H1 (cell line): ENCODE measurements at regions of chr6 and their contacts with region 1.

Region 1: GRCh38 chr6:3848925-3849605 is at the start of gene FAM50B:
- DNase-seq: peak; percentile 64 to 99
- H3K4me3 ChIP-seq: peak within 1 kb of the TSS; percentile 46 to 71 (median 60)
- H3K27ac ChIP-seq: no peak within 1 kb of the TSS
- H3K4me1 ChIP-seq: peaks cover 0 to 10% (median 4%) of the 10 kb centered on the region in 4 experiments; a peak in 5 of 7 replicates
- H3K27me3 ChIP-seq: 0 out of 7 replicates have a peak, but pooled peaks cover 0 to 2% (median 0%) of the 10 kb centered on the region in 4 experiments
- CTCF ChIP-seq: peak; percentile 91 to 99 (median 95)
- EP300 ChIP-seq: no peak
- POLR2A ChIP-seq: peak in 1 of 2 experiments; percentile 50; a peak in 1 of 3 replicates
- RAD21 ChIP-seq: peak; percentile 85 to 89
- total RNA-seq, gene FAM50B: 3.1 and 3.8 TPM in 2 replicates

Region 2: DNA sequence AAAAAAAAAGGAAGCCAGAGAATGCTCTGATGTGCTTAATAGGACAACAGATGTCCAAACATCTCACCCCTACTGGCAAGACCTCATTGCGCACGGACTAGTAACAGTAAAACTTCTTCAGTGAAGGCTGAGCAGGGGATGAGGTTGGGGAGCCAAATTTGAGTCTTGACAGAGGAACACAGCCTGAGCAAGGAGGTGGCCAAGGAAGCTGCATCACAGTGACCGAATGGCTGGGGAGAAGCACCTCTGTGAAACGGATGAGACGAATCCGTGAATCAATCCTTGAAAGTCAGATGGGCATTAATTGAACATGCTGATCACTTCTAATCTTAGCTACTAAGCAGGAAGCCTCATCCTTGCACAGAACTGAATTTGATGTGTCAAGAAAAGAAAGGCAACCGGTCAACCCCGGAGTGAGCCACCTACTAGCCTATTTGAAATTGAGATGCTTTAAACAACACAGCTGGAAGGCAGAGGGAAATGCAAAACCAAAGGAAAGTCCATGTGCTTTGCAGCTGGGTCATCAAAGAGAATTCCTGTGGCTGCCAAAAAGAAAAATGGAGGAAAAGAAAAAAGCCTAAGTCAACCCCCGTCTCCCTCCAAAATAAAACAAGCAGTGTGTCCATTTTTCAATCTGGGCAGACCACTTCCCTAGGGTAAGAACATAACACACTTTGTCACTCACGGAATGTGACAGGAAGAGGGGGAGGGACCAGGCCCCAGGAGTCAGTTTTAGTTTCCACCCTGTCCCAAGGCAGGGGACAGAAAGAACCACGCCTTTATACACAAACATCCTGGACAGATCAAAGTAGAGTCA is 127.0 kb before region 1 on chr6:
- CTCF ChIA-PET with region 1: no interaction called
- POLR2A ChIA-PET with region 1: no interaction called
- DNase-seq: no peak
- H3K4me3 ChIP-seq: no peak overlapping the region
- H3K27ac ChIP-seq: no peak overlapping the region
- H3K4me1 ChIP-seq: peaks cover 0 to 12% (median 4%) of the 10 kb centered on the region in 4 experiments; a peak in 6 of 7 replicates
- H3K27me3 ChIP-seq: no peaks in the 10 kb centered on the region
- CTCF ChIP-seq: no peak
- EP300 ChIP-seq: no peak
- POLR2A ChIP-seq: no peak
- RAD21 ChIP-seq: no peak

Region 3: DNA sequence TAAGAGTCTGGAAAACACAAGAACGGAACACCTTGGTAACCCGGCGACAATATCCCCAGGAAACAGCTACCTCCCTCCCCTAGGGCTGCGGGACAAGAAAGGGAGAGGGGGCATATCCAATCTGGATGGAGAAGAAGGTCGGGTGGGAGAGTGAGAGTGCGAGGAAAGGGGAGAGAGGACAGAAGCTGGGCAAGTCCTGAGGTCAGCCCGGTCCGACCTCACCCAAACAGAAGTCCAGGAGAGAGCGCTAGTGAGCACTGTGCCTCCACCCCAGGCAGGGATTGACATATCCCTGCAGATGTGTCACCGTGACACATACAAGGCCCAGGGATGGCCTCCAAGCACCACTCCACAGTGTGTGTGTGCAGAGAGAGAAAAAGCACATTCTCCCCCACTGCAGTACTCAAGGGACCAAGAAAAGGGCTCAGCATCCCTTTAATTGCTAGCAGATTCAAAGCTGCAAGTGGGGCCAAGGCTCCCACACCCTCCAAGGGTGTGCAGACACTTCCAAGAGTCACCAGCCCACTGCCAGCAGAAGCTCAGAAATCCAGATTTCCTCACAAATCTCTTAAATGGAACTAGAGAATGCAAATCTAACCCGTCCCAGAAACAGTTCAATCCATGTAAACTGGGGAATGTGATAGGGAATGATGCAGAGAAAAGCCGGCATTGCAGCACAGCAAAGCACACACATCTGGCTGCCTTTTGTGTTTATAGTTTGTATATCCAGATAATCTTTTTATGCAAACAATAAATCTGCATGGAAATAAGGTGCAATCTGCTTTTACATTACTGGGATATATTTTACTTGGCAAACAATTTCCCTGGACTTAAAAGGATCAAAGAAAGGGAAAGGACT is 100.6 kb before region 1 on chr6:
- CTCF ChIA-PET with region 1: interaction called, 47 read pairs
- POLR2A ChIA-PET with region 1: interaction called, 7 read pairs
- DNase-seq: peak in 1 of 2 experiments; percentile 81
- H3K4me3 ChIP-seq: no peak overlapping the region
- H3K27ac ChIP-seq: no peak overlapping the region
- H3K4me1 ChIP-seq: peaks cover 0 to 14% (median 5%) of the 10 kb centered on the region in 4 experiments; a peak in 5 of 7 replicates
- H3K27me3 ChIP-seq: peaks cover 12 to 45% (median 39%) of the 10 kb centered on the region in 4 experiments
- CTCF ChIP-seq: peak in 2 of 3 experiments; percentile 79 to 92; a peak in 3 of 4 replicates
- EP300 ChIP-seq: no peak
- POLR2A ChIP-seq: no peak
- RAD21 ChIP-seq: peak; percentile 72 to 80

Region 4: DNA sequence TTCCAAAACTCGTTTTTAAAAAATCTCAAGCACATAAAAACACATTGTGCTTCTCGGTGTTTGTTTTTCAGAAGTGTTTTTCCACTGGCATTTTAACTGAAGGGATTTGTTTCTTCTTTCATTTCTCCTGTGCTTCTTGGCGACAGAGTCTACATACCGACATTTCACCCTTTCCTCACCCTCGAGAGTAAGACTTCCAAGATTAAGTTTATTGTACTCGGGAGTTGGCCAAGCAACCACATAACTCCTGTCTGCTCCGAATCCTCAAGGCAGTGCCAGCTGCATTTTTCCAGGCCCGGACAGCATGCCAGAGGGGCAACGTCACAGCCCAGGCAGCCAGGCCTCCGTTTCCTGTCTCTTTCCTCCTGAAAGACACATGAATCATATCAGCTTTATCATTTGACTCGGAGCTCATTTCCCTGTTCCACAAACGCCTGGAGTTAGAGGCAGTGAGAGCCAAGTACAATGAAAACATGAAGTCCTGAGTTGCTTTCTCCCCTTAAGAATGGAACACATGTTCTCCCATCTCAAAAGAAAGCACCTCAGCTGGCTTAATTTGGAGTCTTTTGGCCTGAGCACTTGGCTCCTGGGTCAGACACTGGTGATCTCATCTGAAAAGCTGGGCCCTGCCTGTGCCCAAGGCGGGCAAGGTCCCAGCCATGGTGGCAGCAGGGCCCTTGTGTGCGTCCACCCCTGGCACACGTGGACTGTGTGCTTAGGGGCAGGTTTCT is 23.0 kb before region 1 on chr6:
- CTCF ChIA-PET with region 1: interaction called, 23 read pairs
- POLR2A ChIA-PET with region 1: no interaction called
- DNase-seq: no peak
- H3K4me3 ChIP-seq: no peak overlapping the region
- H3K27ac ChIP-seq: no peak overlapping the region
- H3K4me1 ChIP-seq: peaks cover 0 to 3% (median under 1%) of the 10 kb centered on the region in 4 experiments; a peak in 2 of 7 replicates
- H3K27me3 ChIP-seq: no peaks in the 10 kb centered on the region
- CTCF ChIP-seq: no peak
- EP300 ChIP-seq: no peak
- POLR2A ChIP-seq: no peak
- RAD21 ChIP-seq: no peak

Region 5: GRCh38 chr6:3876101-3876500 is 27.0 kb after region 1 on chr6:
- CTCF ChIA-PET with region 1: interaction called, 17 read pairs
- POLR2A ChIA-PET with region 1: interaction called, 3 read pairs
- DNase-seq: no peak
- H3K4me3 ChIP-seq: no peak overlapping the region
- H3K27ac ChIP-seq: no peak overlapping the region
- H3K4me1 ChIP-seq: no peaks in the 10 kb centered on the region; a peak in 1 of 7 replicates
- H3K27me3 ChIP-seq: no peaks in the 10 kb centered on the region
- CTCF ChIP-seq: no peak
- EP300 ChIP-seq: no peak
- POLR2A ChIP-seq: no peak
- RAD21 ChIP-seq: no peak

Region 6: DNA sequence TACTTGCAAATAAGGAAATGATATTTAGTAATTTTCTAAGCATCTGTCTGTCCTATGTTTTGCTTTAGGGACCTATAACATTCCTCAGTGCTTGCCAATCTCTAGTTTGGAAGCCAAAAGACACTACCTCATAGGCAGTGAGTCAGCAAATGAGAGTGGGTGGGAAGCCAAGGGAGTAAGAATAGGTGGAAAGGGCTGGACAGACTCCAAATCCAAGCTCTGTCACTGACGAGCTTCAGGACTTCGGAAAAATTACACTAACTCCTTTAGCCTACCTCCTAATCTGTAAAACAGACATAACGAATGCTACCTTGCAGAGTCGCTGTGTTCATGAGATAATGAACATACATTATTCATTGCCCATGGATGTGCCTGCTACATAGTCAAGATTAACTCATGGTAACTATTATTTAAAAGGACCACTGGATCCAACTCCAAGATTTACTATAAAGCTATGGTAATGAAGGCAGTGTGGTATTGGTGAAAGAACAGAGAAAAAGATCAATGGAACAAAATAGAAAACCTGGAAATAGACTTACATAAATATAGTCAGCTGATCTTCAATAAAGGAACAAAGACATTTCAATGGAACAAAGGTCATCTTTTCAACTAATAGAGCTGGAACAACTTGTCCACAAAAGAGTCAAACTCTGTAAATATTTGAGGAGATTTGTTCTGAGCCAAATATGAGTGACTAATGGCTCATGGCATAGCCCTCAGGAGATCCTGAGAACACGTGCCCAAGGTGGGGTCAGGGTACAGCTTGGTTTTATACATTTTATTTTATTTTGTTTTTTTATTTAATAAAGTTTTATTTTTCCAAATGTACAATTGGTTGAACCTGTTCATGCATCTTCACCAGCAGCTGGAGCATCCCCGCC is 64.3 kb after region 1 on chr6:
- CTCF ChIA-PET with region 1: interaction called, 28 read pairs
- POLR2A ChIA-PET with region 1: no interaction called
- DNase-seq: peak in 1 of 2 experiments; percentile 7
- H3K4me3 ChIP-seq: no peak overlapping the region
- H3K27ac ChIP-seq: no peak overlapping the region
- H3K4me1 ChIP-seq: peaks cover 0 to 3% (median 3%) of the 10 kb centered on the region in 4 experiments; a peak in 3 of 7 replicates
- H3K27me3 ChIP-seq: no peaks in the 10 kb centered on the region; a peak in 2 of 7 replicates
- CTCF ChIP-seq: no peak
- EP300 ChIP-seq: no peak
- POLR2A ChIP-seq: no peak
- RAD21 ChIP-seq: no peak

Region 7: GRCh38 chr6:3948866-3949265 is 99.8 kb after region 1 on chr6:
- CTCF ChIA-PET with region 1: interaction called, 15 read pairs
- POLR2A ChIA-PET with region 1: no interaction called
- DNase-seq: no peak
- H3K4me3 ChIP-seq: no peak overlapping the region
- H3K27ac ChIP-seq: no peak overlapping the region
- H3K4me1 ChIP-seq: peaks cover 0 to 6% (median 2%) of the 10 kb centered on the region in 4 experiments; a peak in 1 of 7 replicates
- H3K27me3 ChIP-seq: no peaks in the 10 kb centered on the region
- CTCF ChIP-seq: no peak
- EP300 ChIP-seq: no peak
- POLR2A ChIP-seq: no peak
- RAD21 ChIP-seq: no peak

Region 8: DNA sequence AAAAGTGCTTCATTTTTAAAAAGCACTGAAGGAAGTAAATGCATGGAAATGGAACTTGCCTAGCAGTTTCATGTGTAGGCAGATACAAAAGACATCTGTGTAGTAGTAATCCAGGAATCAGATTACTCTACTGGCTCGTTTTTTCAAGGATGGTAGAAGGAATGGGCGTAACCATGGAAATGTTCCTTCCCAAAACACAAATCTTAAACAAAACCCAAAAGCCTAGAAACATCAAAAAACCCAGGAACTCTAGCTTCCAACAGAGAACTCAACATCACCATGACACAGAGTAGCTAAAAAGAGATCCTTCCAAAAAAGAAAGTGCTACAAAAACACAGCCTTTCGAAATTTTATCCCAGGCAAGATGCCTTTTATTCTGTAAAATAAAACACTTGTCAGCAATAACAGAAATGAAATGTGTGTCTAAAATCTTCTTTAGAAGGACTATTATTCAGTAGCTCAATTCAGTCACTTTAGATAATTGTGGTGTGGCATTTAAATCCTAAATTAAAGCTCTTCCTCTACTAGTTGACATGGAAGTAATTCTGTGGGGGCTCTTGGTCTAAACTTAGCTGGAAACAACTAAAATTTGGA is 148.2 kb after region 1 on chr6:
- CTCF ChIA-PET with region 1: interaction called, 11 read pairs
- POLR2A ChIA-PET with region 1: no interaction called
- DNase-seq: no peak
- H3K4me3 ChIP-seq: no peak overlapping the region
- H3K27ac ChIP-seq: no peak overlapping the region
- H3K4me1 ChIP-seq: peaks cover 0 to 6% (median 1%) of the 10 kb centered on the region in 4 experiments; a peak in 1 of 7 replicates
- H3K27me3 ChIP-seq: no peaks in the 10 kb centered on the region
- CTCF ChIP-seq: no peak
- EP300 ChIP-seq: no peak
- POLR2A ChIP-seq: no peak
- RAD21 ChIP-seq: no peak